Activated naive CD4-positive, alpha-beta T cell treated with anti-CD3 and anti-CD28 coated beads, Interleukin-2, amount 10 ng/mL, durations not matched to agents 7 days and 5 days (primary cell): ENCODE measurements at regions of chr2 and their contacts with region 1.

Region 1: GRCh38 chr2:227657199-227657845 is 9.3 kb upstream of the SCYGR5 start:
- DNase-seq: no peak
- H3K4me3 Mint-ChIP-seq: no peak overlapping the region
- H3K27ac Mint-ChIP-seq: no peak overlapping the region
- H3K4me1 Mint-ChIP-seq: no peaks in the 10 kb centered on the region
- H3K27me3 Mint-ChIP-seq: no peaks in the 10 kb centered on the region

Region 2: DNA sequence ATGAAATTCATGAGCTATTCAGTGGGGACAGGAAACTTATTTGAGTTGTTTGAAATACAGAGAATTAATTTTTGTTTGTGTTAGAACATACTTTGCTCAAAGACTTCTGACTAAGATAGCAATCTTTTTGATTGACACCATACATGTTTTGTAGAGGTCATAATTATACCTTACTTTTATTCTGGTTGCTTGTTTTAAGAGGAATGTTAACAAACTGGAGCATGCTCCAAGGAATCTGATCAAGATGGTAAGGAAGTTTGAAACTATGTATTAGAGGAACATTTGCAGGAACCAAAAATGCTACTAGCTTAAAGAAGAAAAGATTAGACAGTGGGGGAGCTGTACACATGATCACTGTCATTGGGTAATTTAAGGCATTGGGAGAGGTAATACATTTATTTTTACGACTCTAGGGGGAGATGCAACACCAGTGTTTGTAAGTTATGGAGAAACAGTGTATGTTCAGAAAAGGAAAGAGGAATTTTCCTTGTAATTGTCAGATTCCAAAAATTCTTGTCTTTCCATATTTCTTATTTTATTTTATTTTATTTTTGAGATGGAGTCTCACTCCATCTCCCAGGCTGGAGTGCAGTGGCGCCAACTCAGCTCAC is 177.4 kb before region 1 on chr2:
- CTCF ChIA-PET with region 1: interaction called, 18 read pairs
- DNase-seq: no peak
- H3K4me3 Mint-ChIP-seq: no peak overlapping the region
- H3K27ac Mint-ChIP-seq: no peak overlapping the region
- H3K4me1 Mint-ChIP-seq: peaks cover 47% of the 10 kb centered on the region
- H3K27me3 Mint-ChIP-seq: no peaks in the 10 kb centered on the region

Region 3: GRCh38 chr2:227862227-227862740 is 205.0 kb after region 1 on chr2:
- CTCF ChIA-PET with region 1: interaction called, 26 read pairs
- DNase-seq: peak; percentile 31
- H3K4me3 Mint-ChIP-seq: no peak overlapping the region
- H3K27ac Mint-ChIP-seq: no peak overlapping the region
- H3K4me1 Mint-ChIP-seq: no peaks in the 10 kb centered on the region
- H3K27me3 Mint-ChIP-seq: peaks cover 5% of the 10 kb centered on the region